Natural killer cell (primary cell): ENCODE measurements at regions of chr4 and their contacts with region 1.

Region 1: GRCh38 chr4:39977489-39978377 is at the start of gene PDS5A:
- DNase-seq: peak; percentile 86 to 96
- ATAC-seq: peak; percentile 85 to 96 (median 88)
- H3K4me3 ChIP-seq: peak within 1 kb of the TSS; percentile 70
- H3K4me3 Mint-ChIP-seq: peak within 1 kb of the TSS; percentile 90
- H3K27ac ChIP-seq: peak within 1 kb of the TSS; percentile 75
- H3K27ac Mint-ChIP-seq: peak within 1 kb of the TSS; percentile 86 to 88
- H3K4me1 ChIP-seq: peaks cover 13% of the 10 kb centered on the region
- H3K4me1 Mint-ChIP-seq: peaks cover 27 to 31% of the 10 kb centered on the region in 2 donors
- H3K27me3 ChIP-seq: no peaks in the 10 kb centered on the region
- H3K27me3 Mint-ChIP-seq: no peaks in the 10 kb centered on the region
- CTCF ChIP-seq: peak; percentile 80
- total RNA-seq, gene PDS5A: 80.1 to 99.9 (median 99.8) TPM

Region 2: GRCh38 chr4:39469429-39470077 is 508.2 kb before region 1 on chr4:
- intact Hi-C with region 1: loop called (anchors 1 kb)
- DNase-seq: peak in 1 of 2 donors; percentile 68
- ATAC-seq: peak; percentile 83 to 96 (median 87)
- H3K4me3 ChIP-seq: no peak overlapping the region
- H3K4me3 Mint-ChIP-seq: no peak overlapping the region
- H3K27ac ChIP-seq: no peak overlapping the region
- H3K27ac Mint-ChIP-seq: peak overlapping the region in 1 of 2 donors; percentile 36
- H3K4me1 ChIP-seq: no peaks in the 10 kb centered on the region
- H3K4me1 Mint-ChIP-seq: no peaks in the 10 kb centered on the region
- H3K27me3 ChIP-seq: no peaks in the 10 kb centered on the region
- H3K27me3 Mint-ChIP-seq: no peaks in the 10 kb centered on the region
- CTCF ChIP-seq: peak; percentile 91

Region 3: GRCh38 chr4:39638354-39639240 is 339.1 kb before region 1 on chr4 and contains the start of gene SMIM14:
- intact Hi-C with region 1: loop called (anchors 2 kb)
- DNase-seq: peak; percentile 80 to 93
- ATAC-seq: peak; percentile 76 to 90 (median 80)
- H3K4me3 ChIP-seq: peak within 1 kb of the TSS; percentile 76
- H3K4me3 Mint-ChIP-seq: peak within 1 kb of the TSS; percentile 94
- H3K27ac ChIP-seq: peak within 1 kb of the TSS; percentile 90
- H3K27ac Mint-ChIP-seq: peak within 1 kb of the TSS; percentile 94
- H3K4me1 ChIP-seq: peaks cover 21% of the 10 kb centered on the region
- H3K4me1 Mint-ChIP-seq: peaks cover 39 to 48% of the 10 kb centered on the region in 2 donors
- H3K27me3 ChIP-seq: no peaks in the 10 kb centered on the region
- H3K27me3 Mint-ChIP-seq: no peaks in the 10 kb centered on the region
- CTCF ChIP-seq: no peak
- total RNA-seq, gene SMIM14: 12.6 to 21.8 (median 15.2) TPM

Region 4: GRCh38 chr4:39846120-39846519 is 131.6 kb before region 1 on chr4:
- intact Hi-C with region 1: loop called (anchors 10 kb)
- DNase-seq: no peak
- ATAC-seq: no peak
- H3K4me3 ChIP-seq: no peak overlapping the region
- H3K4me3 Mint-ChIP-seq: no peak overlapping the region
- H3K27ac ChIP-seq: no peak overlapping the region
- H3K27ac Mint-ChIP-seq: no peak overlapping the region
- H3K4me1 ChIP-seq: no peaks in the 10 kb centered on the region
- H3K4me1 Mint-ChIP-seq: no peaks in the 10 kb centered on the region
- H3K27me3 ChIP-seq: no peaks in the 10 kb centered on the region
- H3K27me3 Mint-ChIP-seq: no peaks in the 10 kb centered on the region
- CTCF ChIP-seq: no peak

Region 5: GRCh38 chr4:39933671-39934590 is 43.8 kb before region 1 on chr4:
- intact Hi-C with region 1: loop called (anchors 1 kb)
- DNase-seq: peak in 1 of 2 donors; percentile 19
- ATAC-seq: no peak
- H3K4me3 ChIP-seq: no peak overlapping the region
- H3K4me3 Mint-ChIP-seq: peak overlapping the region; percentile 1
- H3K27ac ChIP-seq: peak overlapping the region; percentile 33
- H3K27ac Mint-ChIP-seq: peak overlapping the region; percentile 86 to 91
- H3K4me1 ChIP-seq: peaks cover 30% of the 10 kb centered on the region
- H3K4me1 Mint-ChIP-seq: peaks cover 57 to 71% of the 10 kb centered on the region in 2 donors
- H3K27me3 ChIP-seq: no peaks in the 10 kb centered on the region
- H3K27me3 Mint-ChIP-seq: no peaks in the 10 kb centered on the region
- CTCF ChIP-seq: no peak